Activated CD4-positive, alpha-beta T cell treated with anti-CD3 and anti-CD28 coated beads for 36 hours (primary cell): ENCODE measurements at regions of chr11 and their contacts with region 1.

Region 1: GRCh38 chr11:93543292-93543977 is at the start of gene SMCO4:
- DNase-seq: peak; percentile 88
- ATAC-seq: peak; percentile 81
- H3K4me3 Mint-ChIP-seq: peak within 1 kb of the TSS; percentile 89
- H3K27ac Mint-ChIP-seq: peak within 1 kb of the TSS; percentile 86
- H3K4me1 Mint-ChIP-seq: peaks cover 30% of the 10 kb centered on the region
- H3K27me3 Mint-ChIP-seq: no peaks in the 10 kb centered on the region
- total RNA-seq, gene SMCO4: 24.5 to 24.6 TPM

Region 2: GRCh38 chr11:93054881-93055280 is 488.6 kb before region 1 on chr11:
- CTCF ChIA-PET with region 1: no interaction called
- POLR2A ChIA-PET with region 1: no interaction called
- intact Hi-C with region 1: loop called in 1 of 2 experiments (anchors 10 kb)
- DNase-seq: peak; percentile 57
- ATAC-seq: peak; percentile 91
- H3K4me3 Mint-ChIP-seq: no peak overlapping the region
- H3K27ac Mint-ChIP-seq: peak overlapping the region; percentile 89
- H3K4me1 Mint-ChIP-seq: peaks cover 14% of the 10 kb centered on the region
- H3K27me3 Mint-ChIP-seq: peaks cover 9% of the 10 kb centered on the region

Region 3: GRCh38 chr11:93234602-93235207 is 308.7 kb before region 1 on chr11:
- CTCF ChIA-PET with region 1: interaction called, 3 read pairs
- POLR2A ChIA-PET with region 1: no interaction called
- intact Hi-C with region 1: loop called (anchors 1 kb)
- DNase-seq: peak; percentile 82
- ATAC-seq: peak; percentile 99
- H3K4me3 Mint-ChIP-seq: no peak overlapping the region
- H3K27ac Mint-ChIP-seq: no peak overlapping the region
- H3K4me1 Mint-ChIP-seq: no peaks in the 10 kb centered on the region
- H3K27me3 Mint-ChIP-seq: peaks cover 9% of the 10 kb centered on the region

Region 4: DNA sequence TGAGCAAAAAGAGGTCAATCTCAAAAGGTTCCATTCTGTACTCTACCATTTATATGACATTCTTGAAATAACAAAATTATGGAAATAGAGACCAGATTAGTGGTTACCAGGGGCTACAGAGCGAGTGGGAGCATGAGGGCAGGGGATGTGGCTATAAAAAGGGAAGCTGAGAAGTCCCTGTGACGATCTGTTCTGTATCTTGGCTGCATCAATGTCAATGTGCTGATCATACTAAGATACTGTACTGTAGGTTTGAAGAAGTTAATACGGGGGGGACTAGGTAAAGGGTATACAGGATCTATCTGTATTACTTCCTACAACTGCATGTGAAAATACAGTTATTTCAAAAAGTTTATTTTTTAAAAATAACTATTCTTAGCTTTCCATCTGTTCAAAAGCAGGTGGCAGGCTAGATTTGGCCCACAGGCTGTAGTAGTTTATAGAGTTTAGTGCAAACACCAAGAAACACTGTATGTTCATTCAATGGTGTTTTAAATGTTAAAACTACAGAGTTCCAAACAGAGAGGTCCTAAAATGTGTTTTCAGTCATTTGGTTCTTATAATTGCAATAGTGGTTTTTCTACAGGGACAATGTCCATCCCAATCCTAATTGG is 78.4 kb before region 1 on chr11:
- CTCF ChIA-PET with region 1: no interaction called
- POLR2A ChIA-PET with region 1: no interaction called
- intact Hi-C with region 1: no loop called
- DNase-seq: no peak
- ATAC-seq: no peak
- H3K4me3 Mint-ChIP-seq: no peak overlapping the region
- H3K27ac Mint-ChIP-seq: no peak overlapping the region
- H3K4me1 Mint-ChIP-seq: no peaks in the 10 kb centered on the region
- H3K27me3 Mint-ChIP-seq: no peaks in the 10 kb centered on the region

Region 5: DNA sequence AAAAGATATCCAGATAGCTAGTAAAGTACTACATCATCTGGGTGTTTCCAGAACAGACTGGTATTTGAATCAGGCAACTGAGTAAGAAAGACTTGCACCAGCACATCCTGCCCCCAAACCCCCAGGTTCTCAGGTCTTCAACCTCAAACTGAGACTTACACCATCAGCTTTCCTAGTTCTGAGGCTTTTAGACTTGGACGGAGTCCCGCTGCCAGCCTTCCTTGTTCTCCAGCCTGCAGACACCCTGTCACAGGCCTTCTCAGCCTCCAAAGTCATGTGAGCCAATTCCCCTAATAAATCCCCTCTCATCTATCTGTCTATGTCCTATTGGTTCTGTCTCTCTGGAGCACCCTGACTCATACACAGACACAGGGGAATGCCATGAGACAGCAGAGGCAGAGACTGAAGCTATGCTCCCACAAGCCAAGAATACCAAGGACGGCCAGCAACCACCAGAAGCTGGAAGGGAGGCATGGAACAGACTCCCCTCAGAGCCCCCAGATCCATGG is 11.1 kb before region 1 on chr11:
- CTCF ChIA-PET with region 1: interaction called, 8 read pairs
- POLR2A ChIA-PET with region 1: interaction called, 5 read pairs
- intact Hi-C with region 1: loop called in 1 of 2 experiments (anchors 1 kb)
- DNase-seq: peak; percentile 44
- ATAC-seq: peak; percentile 73
- H3K4me3 Mint-ChIP-seq: no peak overlapping the region
- H3K27ac Mint-ChIP-seq: peak overlapping the region; percentile 59
- H3K4me1 Mint-ChIP-seq: peaks cover 54% of the 10 kb centered on the region
- H3K27me3 Mint-ChIP-seq: no peaks in the 10 kb centered on the region

Region 6: DNA sequence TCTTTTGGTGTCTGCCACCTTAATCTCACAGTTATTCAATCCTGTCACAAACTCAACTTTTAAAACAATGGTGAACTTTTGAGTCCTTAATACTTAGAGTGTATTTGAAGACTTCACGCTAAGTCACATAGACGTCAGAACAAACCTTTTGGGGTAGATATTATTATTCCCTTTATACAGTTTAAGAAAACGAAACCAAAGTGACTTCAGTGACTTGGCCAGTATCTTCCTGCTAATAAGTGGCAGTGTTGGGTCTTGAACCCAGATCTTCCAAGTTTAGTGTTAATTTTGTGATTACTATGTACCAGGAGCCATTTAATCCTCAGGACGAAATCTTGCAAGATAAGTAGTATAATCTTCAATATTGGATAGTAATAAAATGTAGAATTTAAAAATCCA is 118.7 kb after region 1 on chr11:
- CTCF ChIA-PET with region 1: no interaction called
- POLR2A ChIA-PET with region 1: interaction called, 3 read pairs
- intact Hi-C with region 1: loop called (anchors 2 to 5 kb)
- DNase-seq: no peak
- ATAC-seq: no peak
- H3K4me3 Mint-ChIP-seq: peak overlapping the region; percentile 94
- H3K27ac Mint-ChIP-seq: peak overlapping the region; percentile 95
- H3K4me1 Mint-ChIP-seq: peaks cover 44% of the 10 kb centered on the region
- H3K27me3 Mint-ChIP-seq: no peaks in the 10 kb centered on the region

Region 7: GRCh38 chr11:93784152-93784934 is 240.9 kb after region 1 on chr11 and contains the start of gene MED17:
- CTCF ChIA-PET with region 1: no interaction called
- POLR2A ChIA-PET with region 1: no interaction called
- intact Hi-C with region 1: loop called in 1 of 2 experiments (anchors 10 kb)
- DNase-seq: peak; percentile 95
- ATAC-seq: peak; percentile 97
- H3K4me3 Mint-ChIP-seq: peak within 1 kb of the TSS; percentile 89
- H3K27ac Mint-ChIP-seq: peak within 1 kb of the TSS; percentile 99
- H3K4me1 Mint-ChIP-seq: peaks cover 42% of the 10 kb centered on the region
- H3K27me3 Mint-ChIP-seq: no peaks in the 10 kb centered on the region
- total RNA-seq, gene MED17: 28.6 to 29.9 TPM